Astrocyte of the cerebellum (primary cell): ENCODE measurements at regions of chr7 and their contacts with region 1.

Region 1: DNA sequence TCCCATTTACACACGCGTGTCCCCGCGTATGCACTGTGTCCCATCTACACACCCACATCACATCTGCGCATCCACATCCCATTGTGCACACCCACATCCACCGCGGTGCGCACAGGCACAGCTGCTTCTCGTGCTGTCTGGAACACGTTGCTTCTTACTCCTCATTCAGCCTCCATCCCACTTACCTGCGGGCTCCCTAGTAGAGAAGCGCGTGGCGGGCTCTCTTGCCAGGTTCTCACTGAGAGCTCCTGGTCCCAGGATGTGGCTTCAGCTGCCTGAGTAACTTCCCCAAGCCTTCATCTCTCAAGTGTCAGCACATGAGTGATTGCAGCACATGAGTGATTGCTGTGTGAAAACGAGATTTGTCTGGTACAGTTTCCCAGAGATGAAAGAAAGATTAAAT is 117.8 kb downstream of the TRRAP start:
- DNase-seq: no peak
- H3K4me3 ChIP-seq: no peak overlapping the region
- CTCF ChIP-seq: no peak

Region 2: GRCh38 chr7:98922393-98923187 is 73.6 kb before region 1 on chr7:
- in situ Hi-C with region 1: loop called (anchors 5 kb)
- DNase-seq: peak; percentile 79
- H3K4me3 ChIP-seq: no peak overlapping the region
- CTCF ChIP-seq: no peak

Region 3: GRCh38 chr7:99098824-99099498 is 102.8 kb after region 1 on chr7:
- in situ Hi-C with region 1: no loop called
- DNase-seq: no peak
- H3K4me3 ChIP-seq: no peak overlapping the region
- CTCF ChIP-seq: no peak

Region 4: GRCh38 chr7:99210264-99210970 is 214.3 kb after region 1 on chr7:
- in situ Hi-C with region 1: no loop called
- DNase-seq: no peak
- H3K4me3 ChIP-seq: no peak overlapping the region
- CTCF ChIP-seq: no peak